Natural killer cell (primary cell): ENCODE measurements at regions of chr1 and their contacts with region 1.

Region 1: GRCh38 chr1:33633019-33633801 is 160.8 kb downstream of the ZSCAN20 start:
- DNase-seq: peak; percentile 75 to 89
- ATAC-seq: peak; percentile 92 to 100 (median 94)
- H3K4me3 ChIP-seq: no peak overlapping the region
- H3K4me3 Mint-ChIP-seq: no peak overlapping the region
- H3K27ac ChIP-seq: no peak overlapping the region
- H3K27ac Mint-ChIP-seq: no peak overlapping the region
- H3K4me1 ChIP-seq: peaks cover 6% of the 10 kb centered on the region
- H3K4me1 Mint-ChIP-seq: peaks cover 0 to 9% of the 10 kb centered on the region in 2 donors
- H3K27me3 ChIP-seq: peaks cover 2% of the 10 kb centered on the region
- H3K27me3 Mint-ChIP-seq: peaks cover 23 to 36% of the 10 kb centered on the region in 2 donors
- CTCF ChIP-seq: peak; percentile 96

Region 2: DNA sequence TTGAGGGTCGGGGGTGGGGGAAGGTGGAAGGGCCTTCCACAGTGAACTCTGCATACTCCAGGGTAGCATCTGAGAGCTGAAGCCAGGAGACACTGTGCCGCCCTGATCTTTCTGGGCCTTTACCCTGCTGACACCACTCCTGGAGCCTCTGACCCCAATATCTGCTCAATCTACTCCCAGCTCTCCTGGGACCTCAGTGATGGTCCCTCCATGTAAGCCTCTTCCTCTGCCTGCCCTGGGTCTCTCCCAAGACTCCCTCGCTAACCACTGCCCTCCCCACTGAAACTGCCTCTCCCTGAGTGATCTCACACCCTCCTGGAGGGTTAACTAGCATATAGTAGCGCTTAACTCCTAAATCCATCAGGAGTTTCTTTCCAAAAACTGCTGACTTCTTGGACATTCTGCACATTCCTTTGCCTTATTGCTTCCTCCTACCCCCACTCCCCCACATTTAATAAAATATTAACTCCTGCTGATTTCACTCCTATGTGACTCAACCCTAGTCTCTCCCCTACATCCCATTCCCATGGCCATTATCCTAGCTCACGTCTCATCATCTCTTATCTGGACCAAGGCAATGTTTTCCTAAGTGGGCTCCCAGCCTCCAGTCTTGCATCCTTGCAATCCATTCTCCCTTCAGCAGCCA is 376.3 kb after region 1 on chr1:
- intact Hi-C with region 1: loop called (anchors 5 kb)
- DNase-seq: no peak
- ATAC-seq: no peak
- H3K4me3 ChIP-seq: no peak overlapping the region
- H3K4me3 Mint-ChIP-seq: no peak overlapping the region
- H3K27ac ChIP-seq: no peak overlapping the region
- H3K27ac Mint-ChIP-seq: no peak overlapping the region
- H3K4me1 ChIP-seq: no peaks in the 10 kb centered on the region
- H3K4me1 Mint-ChIP-seq: no peaks in the 10 kb centered on the region
- H3K27me3 ChIP-seq: no peaks in the 10 kb centered on the region
- H3K27me3 Mint-ChIP-seq: peaks cover 6 to 23% of the 10 kb centered on the region in 2 donors
- CTCF ChIP-seq: no peak

Region 3: DNA sequence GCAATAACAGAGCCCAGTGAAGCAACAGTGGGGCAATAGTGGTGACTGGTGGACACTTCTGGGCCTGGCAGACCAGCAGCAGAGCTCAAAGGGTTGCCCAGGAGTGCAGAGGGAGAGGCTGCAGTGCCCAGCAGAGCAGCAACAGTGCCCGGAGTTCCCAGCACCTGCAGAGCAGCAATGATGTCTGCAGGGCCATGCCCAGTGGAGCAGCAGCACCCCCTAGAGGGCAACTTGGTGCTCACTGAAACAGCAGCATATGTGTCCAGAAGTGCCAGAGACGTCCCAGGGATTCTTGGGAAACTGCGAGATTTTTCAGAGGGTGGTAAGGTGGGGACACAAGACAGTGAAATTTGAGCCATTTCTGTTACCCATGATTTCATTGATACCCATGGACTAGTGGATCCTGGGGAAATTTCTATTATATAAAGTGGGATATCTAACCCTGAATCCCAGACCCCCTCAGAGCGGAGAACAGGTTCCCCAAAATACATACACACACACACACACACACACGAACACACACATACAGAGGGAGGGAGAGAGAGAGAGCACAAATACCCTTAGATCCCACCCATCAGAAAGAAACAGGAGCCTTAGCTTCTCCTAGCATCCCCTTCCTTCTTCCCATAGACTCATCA is 964.8 kb after region 1 on chr1:
- intact Hi-C with region 1: loop called (anchors 5 kb)
- DNase-seq: peak; percentile 23 to 47
- ATAC-seq: peak in 1 of 3 donors; percentile 61
- H3K4me3 ChIP-seq: no peak overlapping the region
- H3K4me3 Mint-ChIP-seq: no peak overlapping the region
- H3K27ac ChIP-seq: no peak overlapping the region
- H3K27ac Mint-ChIP-seq: no peak overlapping the region
- H3K4me1 ChIP-seq: no peaks in the 10 kb centered on the region
- H3K4me1 Mint-ChIP-seq: no peaks in the 10 kb centered on the region
- H3K27me3 ChIP-seq: no peaks in the 10 kb centered on the region
- H3K27me3 Mint-ChIP-seq: peaks cover 9 to 19% of the 10 kb centered on the region in 2 donors
- CTCF ChIP-seq: peak; percentile 51

Region 4: GRCh38 chr1:34742667-34743270 is 1109.6 kb after region 1 on chr1:
- intact Hi-C with region 1: loop called (anchors 5 kb)
- DNase-seq: peak; percentile 69 to 78
- ATAC-seq: peak; percentile 70 to 98 (median 83)
- H3K4me3 ChIP-seq: no peak overlapping the region
- H3K4me3 Mint-ChIP-seq: no peak overlapping the region
- H3K27ac ChIP-seq: no peak overlapping the region
- H3K27ac Mint-ChIP-seq: no peak overlapping the region
- H3K4me1 ChIP-seq: peaks cover 3% of the 10 kb centered on the region
- H3K4me1 Mint-ChIP-seq: peaks cover 4 to 8% of the 10 kb centered on the region in 2 donors
- H3K27me3 ChIP-seq: no peaks in the 10 kb centered on the region
- H3K27me3 Mint-ChIP-seq: peaks cover 6 to 10% of the 10 kb centered on the region in 2 donors
- CTCF ChIP-seq: peak; percentile 88

Region 5: DNA sequence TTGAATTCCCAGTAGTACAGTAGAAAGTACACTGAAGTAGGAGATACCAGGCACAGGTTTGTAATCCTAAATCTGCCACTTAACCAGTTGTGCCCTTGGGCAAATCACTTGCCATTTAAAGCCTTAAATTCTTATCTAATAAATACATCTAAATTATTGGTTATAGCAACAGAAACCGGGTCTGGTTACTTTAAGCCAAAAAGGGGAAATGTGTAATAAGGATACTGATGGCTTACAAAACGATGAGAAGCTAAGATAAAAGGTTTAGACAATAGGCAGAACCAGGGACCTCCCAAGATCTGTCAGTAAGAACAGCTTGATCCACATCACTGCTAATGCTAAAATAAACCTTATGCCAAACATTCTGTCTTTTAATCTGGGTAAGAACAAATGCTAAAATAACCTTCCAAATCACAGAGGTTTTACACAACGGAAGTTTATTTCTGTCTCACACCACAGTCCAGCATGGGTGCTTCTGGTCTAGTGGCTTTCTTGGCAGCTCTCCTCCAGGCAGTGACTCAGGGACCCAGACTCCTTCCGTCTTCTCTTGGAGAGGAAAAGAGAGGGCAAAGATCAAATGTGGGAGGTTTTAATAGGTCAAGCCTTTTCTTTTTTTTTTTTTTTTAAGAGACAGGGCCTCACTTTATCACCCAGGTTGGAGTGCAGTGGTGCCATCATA is 1429.4 kb after region 1 on chr1:
- intact Hi-C with region 1: no loop called
- DNase-seq: no peak
- ATAC-seq: no peak
- H3K4me3 ChIP-seq: no peak overlapping the region
- H3K4me3 Mint-ChIP-seq: no peak overlapping the region
- H3K27ac ChIP-seq: no peak overlapping the region
- H3K27ac Mint-ChIP-seq: no peak overlapping the region
- H3K4me1 ChIP-seq: no peaks in the 10 kb centered on the region
- H3K4me1 Mint-ChIP-seq: no peaks in the 10 kb centered on the region
- H3K27me3 ChIP-seq: no peaks in the 10 kb centered on the region
- H3K27me3 Mint-ChIP-seq: peaks cover 13 to 21% of the 10 kb centered on the region in 2 donors
- CTCF ChIP-seq: no peak